ENCODE measurements at regions of chr2 and their contacts with region 1.

Region 1: DNA sequence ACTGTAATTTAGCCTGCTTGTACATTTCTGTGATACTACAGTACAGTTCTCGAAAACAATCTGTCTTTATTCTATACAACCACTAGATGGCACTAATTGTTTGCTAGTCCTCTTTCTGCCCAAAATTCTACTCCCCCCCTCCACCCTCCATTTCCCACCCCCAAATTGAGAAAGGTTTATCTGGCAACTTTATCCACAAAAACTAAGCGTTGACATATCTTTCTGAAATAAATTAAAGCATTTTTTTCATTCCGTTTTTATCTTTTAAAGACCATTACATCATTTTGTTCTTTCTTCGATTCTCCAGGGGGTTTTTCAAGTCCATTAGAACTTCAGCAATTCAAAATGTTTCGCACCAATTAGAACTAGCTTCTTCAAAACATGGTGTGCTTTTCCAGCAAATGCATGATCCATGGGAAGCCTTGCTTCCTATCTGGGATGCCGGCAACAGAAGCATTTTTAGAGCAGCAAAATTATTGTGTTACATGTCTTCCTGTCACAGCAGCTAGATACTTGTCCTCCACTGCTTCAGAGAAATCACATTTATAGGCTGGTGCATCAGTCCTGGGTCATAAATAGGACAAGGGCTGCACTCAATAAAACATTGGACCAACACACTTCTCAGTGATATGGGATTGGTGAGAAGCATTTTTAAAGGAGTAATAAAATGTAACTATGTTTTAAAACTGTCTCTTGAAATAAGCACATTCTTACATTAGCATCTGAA is 241.3 kb downstream of the PAX3 start:
- DNase-seq: peak in 3 of 14 experiments; percentile 6 to 12 (median 9)
- ATAC-seq: no peak
- H3K4me3 ChIP-seq: no peak overlapping the region
- H3K4me3 Mint-ChIP-seq: no peak overlapping the region
- H3K27ac ChIP-seq: no peak overlapping the region
- H3K27ac Mint-ChIP-seq: no peak overlapping the region
- H3K4me1 ChIP-seq: no peaks in the 10 kb centered on the region
- H3K4me1 Mint-ChIP-seq: no peaks in the 10 kb centered on the region
- H3K27me3 ChIP-seq: peaks cover 4 to 11% of the 10 kb centered on the region in 2 experiments
- H3K27me3 Mint-ChIP-seq: peaks cover 61% of the 10 kb centered on the region
- CTCF ChIP-seq: peak; percentile 67

Region 2: DNA sequence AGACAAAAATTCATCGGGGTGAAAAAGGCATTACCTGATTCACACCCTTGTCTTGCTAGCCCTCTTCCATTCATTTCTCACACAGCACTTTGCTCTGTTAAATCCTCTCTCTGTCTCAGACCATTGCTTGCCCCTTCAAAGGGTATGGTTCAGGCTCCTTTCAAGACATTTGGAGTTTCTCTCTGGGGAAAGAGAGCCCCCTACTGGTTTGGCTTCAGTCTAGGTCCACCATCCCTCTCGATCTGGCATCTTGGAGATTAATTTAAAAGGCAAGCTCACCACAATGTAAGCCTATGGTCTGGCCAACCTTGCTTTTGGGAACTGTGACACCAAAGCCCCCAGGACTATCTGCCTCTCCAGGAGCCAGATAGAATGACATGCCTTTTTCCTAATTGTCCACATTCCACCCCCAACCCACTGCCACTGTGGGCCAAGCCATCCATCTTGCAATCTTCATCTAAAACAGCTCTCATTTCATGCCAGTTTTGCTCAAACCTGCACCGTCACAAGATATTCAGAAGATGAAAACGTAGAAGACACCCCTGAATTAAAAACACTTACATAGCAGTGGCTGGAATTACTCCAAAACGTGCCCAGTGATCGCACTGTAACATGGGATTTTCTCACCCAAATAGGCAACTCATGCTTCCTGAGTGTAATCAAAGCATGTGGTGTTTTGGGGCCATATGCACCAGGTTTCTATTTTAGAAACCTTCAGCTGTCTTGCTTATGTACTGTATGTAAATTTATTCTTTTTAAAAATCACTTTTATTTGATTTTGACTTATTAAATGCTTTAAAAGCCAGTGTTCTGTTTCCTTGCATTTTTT is 504.5 kb after region 1 on chr2:
- CTCF ChIA-PET with region 1: no interaction called
- POLR2A ChIA-PET with region 1: no interaction called
- intact Hi-C with region 1: loop called (anchors 2 to 5 kb)
- DNase-seq: peak in 6 of 14 experiments; percentile 4 to 64 (median 43)
- ATAC-seq: no peak
- H3K4me3 ChIP-seq: no peak overlapping the region
- H3K4me3 Mint-ChIP-seq: no peak overlapping the region
- H3K27ac ChIP-seq: no peak overlapping the region
- H3K27ac Mint-ChIP-seq: no peak overlapping the region
- H3K4me1 ChIP-seq: no peaks in the 10 kb centered on the region
- H3K4me1 Mint-ChIP-seq: no peaks in the 10 kb centered on the region
- H3K27me3 ChIP-seq: no peaks in the 10 kb centered on the region
- H3K27me3 Mint-ChIP-seq: no peaks in the 10 kb centered on the region
- CTCF ChIP-seq: peak; percentile 24

Region 3: DNA sequence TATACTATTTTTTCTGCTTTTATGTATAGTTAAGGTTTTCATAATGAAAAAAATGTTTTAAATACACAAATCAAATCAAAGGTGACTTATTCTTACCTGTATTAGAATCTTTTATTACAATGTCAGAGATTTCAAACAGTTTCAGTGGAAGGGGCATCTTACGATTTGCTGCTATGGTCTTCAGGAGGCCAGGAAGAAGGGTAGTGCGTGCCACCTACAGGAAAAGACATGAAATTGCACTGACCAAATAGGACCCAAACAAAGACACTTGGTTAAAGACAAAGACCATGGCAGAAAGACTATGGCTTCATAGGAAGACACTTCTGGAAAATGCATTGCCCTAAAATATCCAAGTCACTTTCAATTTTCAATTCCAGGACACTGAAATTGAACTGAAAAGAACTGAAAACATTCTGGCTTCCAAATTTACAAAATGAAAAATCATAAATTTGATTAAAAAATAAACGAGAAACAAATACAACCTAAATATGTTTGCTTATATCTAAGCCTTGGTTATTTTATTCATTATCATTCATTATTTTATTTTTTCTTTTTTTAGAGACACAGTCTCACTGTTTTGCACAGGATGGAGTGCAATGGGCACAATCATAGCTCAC is 556.3 kb after region 1 on chr2:
- CTCF ChIA-PET with region 1: no interaction called
- POLR2A ChIA-PET with region 1: no interaction called
- intact Hi-C with region 1: loop called (anchors 5 to 10 kb)
- DNase-seq: peak in 4 of 14 experiments; percentile 10 to 45 (median 32)
- ATAC-seq: no peak
- H3K4me3 ChIP-seq: no peak overlapping the region
- H3K4me3 Mint-ChIP-seq: no peak overlapping the region
- H3K27ac ChIP-seq: no peak overlapping the region
- H3K27ac Mint-ChIP-seq: no peak overlapping the region
- H3K4me1 ChIP-seq: no peaks in the 10 kb centered on the region
- H3K4me1 Mint-ChIP-seq: peaks cover 3% of the 10 kb centered on the region
- H3K27me3 ChIP-seq: no peaks in the 10 kb centered on the region
- H3K27me3 Mint-ChIP-seq: no peaks in the 10 kb centered on the region
- CTCF ChIP-seq: peak; percentile 40

Measured in CD4-positive, alpha-beta T cell (primary cell).